ENCODE measurements at regions of chr3 and their contacts with region 1.

Region 1: DNA sequence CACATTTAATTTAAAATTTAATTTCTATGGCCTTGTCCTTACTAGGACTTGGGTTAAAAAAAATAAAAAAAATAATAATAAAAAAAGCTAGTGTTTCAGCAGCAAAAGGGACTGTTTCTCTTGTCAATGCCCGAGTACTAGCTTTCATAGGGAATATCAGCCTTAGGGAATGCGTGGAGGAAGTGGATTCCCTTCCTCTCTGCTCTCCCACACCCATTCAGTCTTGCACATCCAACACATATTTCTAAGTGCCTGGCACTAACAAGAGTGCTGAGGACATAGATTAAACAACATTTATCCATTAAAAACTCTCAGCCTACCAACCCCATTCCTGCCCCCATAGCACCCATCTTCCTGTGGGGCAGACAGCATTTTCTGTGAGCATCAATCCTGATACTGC is 6.2 kb downstream of the ZNF385D start:
- DNase-seq: no peak
- ATAC-seq: no peak
- H3K4me3 ChIP-seq: no peak overlapping the region
- H3K27ac ChIP-seq: no peak overlapping the region
- H3K4me1 ChIP-seq: no peaks in the 10 kb centered on the region
- H3K27me3 ChIP-seq: no peaks in the 10 kb centered on the region
- CTCF ChIP-seq: no peak

Region 2: DNA sequence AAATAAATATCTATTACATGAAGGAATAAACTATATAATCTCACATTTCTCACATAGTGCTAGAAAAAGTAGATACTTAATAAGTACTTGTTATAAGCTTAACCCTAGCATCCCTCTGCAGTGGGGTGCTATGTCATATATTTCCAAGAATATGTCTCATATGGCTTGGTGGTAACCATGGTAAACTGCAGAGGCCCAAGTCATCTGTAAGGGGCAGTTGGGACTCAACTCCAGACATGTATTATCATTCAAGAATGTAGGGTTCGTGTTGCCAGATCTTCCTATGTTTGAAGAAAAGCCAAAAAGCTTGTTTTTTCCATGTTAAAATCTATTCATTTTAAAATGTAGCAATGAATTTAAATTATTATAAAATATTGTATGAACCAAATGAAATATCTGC is 40.0 kb before region 1 on chr3:
- CTCF ChIA-PET with region 1: no interaction called
- POLR2A ChIA-PET with region 1: interaction called, 14 read pairs
- in situ Hi-C with region 1: no loop called
- intact Hi-C with region 1: no loop called
- DNase-seq: no peak
- ATAC-seq: no peak
- H3K4me3 ChIP-seq: no peak overlapping the region
- H3K27ac ChIP-seq: peak overlapping the region; percentile 72; the same call in 1 of the 2 replicates
- H3K4me1 ChIP-seq: peaks cover 3% of the 10 kb centered on the region; the same call in 1 of the 2 replicates
- H3K27me3 ChIP-seq: no peaks in the 10 kb centered on the region
- CTCF ChIP-seq: no peak